H1 (cell line): ENCODE measurements at regions of chr9 and their contacts with region 1.

Region 1: DNA sequence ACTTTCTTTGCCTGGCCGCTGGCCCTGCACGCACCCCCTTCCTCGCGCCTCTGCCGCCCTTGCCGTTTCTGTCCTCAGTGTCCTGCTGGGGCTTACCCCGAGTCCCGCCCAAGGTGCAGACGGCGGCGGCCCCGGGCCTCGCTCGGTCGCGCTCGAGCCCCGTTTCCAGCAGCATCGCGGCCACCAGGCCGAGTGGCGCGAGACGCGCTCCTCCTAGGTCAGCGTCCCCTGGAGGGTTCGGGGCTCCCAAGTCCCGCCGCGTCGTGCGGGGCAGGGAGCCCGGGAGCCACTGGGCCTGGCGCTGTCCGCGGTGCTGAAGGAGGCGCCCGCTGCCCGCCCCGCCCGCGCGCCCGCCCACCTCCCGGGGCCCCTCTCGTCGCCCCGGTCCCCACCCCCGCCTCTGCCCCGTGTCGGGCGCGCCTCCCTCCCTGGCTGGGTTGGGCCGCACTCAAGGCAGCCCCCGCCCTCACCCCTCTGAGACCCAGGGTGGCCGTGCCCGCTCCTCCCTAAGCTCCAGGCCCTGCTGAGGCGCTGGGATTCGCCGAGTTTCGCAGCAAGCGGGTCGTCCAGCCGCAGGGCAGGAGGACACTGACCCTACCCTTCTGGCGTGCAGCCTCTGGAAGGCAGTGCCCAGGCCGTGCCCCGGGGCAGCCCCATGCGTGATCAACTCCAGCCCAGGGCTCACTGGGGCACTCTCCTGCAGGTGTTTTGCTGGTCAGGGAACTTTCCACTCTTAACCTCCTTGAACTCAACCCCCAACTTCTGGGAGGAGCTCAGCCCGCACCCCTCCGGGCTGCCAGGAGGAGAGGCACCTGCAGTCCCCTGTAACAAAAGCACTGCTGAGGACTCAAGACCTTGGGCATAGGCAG is at the start of gene LHX3:
- DNase-seq: peak in 1 of 2 experiments; percentile 83
- H3K4me3 ChIP-seq: peak within 1 kb of the TSS in 1 of 4 experiments; percentile 37; a peak in 1 of 8 replicates
- H3K27ac ChIP-seq: no peak within 1 kb of the TSS
- H3K4me1 ChIP-seq: peaks cover 2 to 9% (median 6%) of the 10 kb centered on the region in 4 experiments; a peak in 6 of 7 replicates
- H3K27me3 ChIP-seq: peaks cover 47 to 61% (median 60%) of the 10 kb centered on the region in 4 experiments
- CTCF ChIP-seq: no peak
- EP300 ChIP-seq: no peak
- POLR2A ChIP-seq: no peak
- RAD21 ChIP-seq: no peak
- total RNA-seq, gene LHX3: not detected in 2 replicates

Region 2: GRCh38 chr9:135864447-135865049 is 340.5 kb before region 1 on chr9:
- CTCF ChIA-PET with region 1: no interaction called
- POLR2A ChIA-PET with region 1: no interaction called
- DNase-seq: peak; percentile 43 to 97
- H3K4me3 ChIP-seq: no peak overlapping the region
- H3K27ac ChIP-seq: no peak overlapping the region
- H3K4me1 ChIP-seq: peaks cover 0 to 9% (median 0%) of the 10 kb centered on the region in 4 experiments; a peak in 3 of 7 replicates
- H3K27me3 ChIP-seq: no peaks in the 10 kb centered on the region
- CTCF ChIP-seq: peak; percentile 65 to 82 (median 80)
- EP300 ChIP-seq: no peak
- POLR2A ChIP-seq: no peak
- RAD21 ChIP-seq: peak; percentile 58 to 70

Region 3: GRCh38 chr9:136138566-136138965 is 66.5 kb before region 1 on chr9:
- CTCF ChIA-PET with region 1: interaction called, 10 read pairs
- POLR2A ChIA-PET with region 1: interaction called, 4 read pairs
- DNase-seq: peak; percentile 66 to 95
- H3K4me3 ChIP-seq: 0 out of 8 replicates have a peak overlapping the region, but pooled peaks of 1 of the 4 experiments have one; percentile 20
- H3K27ac ChIP-seq: no peak overlapping the region
- H3K4me1 ChIP-seq: peaks cover 3 to 28% (median 18%) of the 10 kb centered on the region in 4 experiments
- H3K27me3 ChIP-seq: peaks cover 4 to 10% (median 10%) of the 10 kb centered on the region in 4 experiments; a peak in 6 of 7 replicates
- CTCF ChIP-seq: peak in 2 of 3 experiments; percentile 78 to 95; a peak in 3 of 4 replicates
- EP300 ChIP-seq: no peak
- POLR2A ChIP-seq: no peak
- RAD21 ChIP-seq: peak; percentile 68 to 77

Region 4: GRCh38 chr9:136189394-136190236 is 15.5 kb before region 1 on chr9:
- CTCF ChIA-PET with region 1: interaction called, 18 read pairs
- POLR2A ChIA-PET with region 1: interaction called, 9 read pairs
- DNase-seq: peak in 1 of 2 experiments; percentile 50
- H3K4me3 ChIP-seq: no peak overlapping the region
- H3K27ac ChIP-seq: no peak overlapping the region
- H3K4me1 ChIP-seq: peaks cover 0 to 11% (median 6%) of the 10 kb centered on the region in 4 experiments; a peak in 5 of 7 replicates
- H3K27me3 ChIP-seq: peaks cover 33 to 49% (median 46%) of the 10 kb centered on the region in 4 experiments
- CTCF ChIP-seq: no peak
- EP300 ChIP-seq: no peak
- POLR2A ChIP-seq: no peak
- RAD21 ChIP-seq: no peak

Region 5: DNA sequence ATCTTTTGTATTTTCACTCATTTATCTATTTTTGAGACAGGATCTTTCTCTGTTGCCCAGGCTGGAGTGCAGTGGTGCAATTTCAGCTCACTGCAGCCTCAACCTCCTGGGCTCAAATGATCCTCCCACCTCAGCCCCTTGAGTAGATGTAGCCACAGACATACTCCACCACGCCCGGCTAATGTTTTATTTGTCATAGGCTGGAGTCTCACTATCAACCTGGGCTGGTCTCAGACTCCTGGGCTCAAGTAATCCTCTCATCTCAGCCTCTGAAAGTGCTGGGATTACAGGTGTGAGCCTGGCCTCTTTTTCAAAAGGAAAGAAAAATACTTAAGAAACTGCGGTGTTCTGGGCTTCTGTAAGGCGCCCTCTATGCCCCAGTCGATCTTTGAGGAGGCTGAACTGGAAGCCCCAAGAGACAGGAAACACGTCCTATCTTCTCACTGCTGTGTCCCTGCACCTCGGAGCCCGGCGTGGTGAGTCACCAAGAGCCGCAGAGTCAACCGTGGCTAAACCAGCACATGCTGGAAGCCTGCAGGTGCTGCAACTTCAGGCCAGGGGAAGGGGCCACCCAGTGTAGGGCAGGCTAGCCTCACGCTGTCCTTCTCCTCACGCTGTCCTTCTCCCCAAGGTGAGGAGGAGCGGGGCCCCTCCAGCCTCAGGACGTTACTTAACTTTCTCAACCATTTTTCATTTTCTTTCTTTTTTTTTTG is 15.1 kb after region 1 on chr9:
- CTCF ChIA-PET with region 1: interaction called, 26 read pairs
- POLR2A ChIA-PET with region 1: interaction called, 17 read pairs
- DNase-seq: no peak
- H3K4me3 ChIP-seq: no peak overlapping the region
- H3K27ac ChIP-seq: no peak overlapping the region
- H3K4me1 ChIP-seq: peaks cover 0 to 2% (median 0%) of the 10 kb centered on the region in 4 experiments; a peak in 2 of 7 replicates
- H3K27me3 ChIP-seq: no peaks in the 10 kb centered on the region
- CTCF ChIP-seq: no peak
- EP300 ChIP-seq: no peak
- POLR2A ChIP-seq: no peak
- RAD21 ChIP-seq: no peak

Region 6: DNA sequence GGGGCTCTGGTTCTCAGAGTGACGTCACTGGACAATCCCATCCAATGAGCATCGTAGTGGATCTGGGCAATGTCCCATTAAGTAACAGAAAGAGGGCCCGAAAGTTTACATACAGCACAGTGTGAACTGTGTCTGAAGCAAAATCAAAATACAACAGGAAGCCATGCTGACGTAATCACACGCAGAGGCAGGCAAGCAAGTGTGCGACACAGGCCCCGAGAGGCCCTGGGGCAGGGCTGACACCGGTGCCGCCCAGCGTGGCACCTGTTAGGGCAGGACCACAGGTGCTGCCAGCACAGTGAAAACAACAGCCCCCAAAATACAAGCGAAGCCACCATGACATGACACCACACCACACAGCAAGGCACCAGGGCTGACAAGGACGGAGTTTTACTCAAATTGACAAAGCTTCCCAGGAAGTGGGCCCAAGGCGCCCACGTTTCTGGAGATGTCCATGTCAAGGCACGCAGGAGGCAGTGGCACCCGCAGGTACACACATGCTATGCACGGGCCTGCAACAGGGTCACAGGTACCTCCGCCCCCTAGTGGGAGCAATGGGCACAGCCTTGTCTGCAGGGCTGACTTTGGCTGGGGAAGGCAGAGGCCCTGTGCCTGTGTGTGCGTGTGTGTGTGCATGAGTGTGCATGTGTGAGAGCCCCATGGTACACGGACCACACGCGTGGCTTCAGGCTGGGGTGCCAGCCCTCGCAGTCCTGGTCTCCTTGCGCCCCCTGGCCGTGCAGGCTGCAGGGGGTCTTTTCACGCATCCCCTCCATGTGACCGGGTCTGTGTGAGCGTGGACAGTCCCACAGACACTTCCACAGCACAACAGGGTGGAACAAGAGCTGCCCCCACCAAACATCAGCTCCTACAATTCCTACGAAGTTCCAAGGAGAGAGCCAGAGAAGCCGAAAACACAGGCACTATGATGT is 20.9 kb after region 1 on chr9:
- CTCF ChIA-PET with region 1: interaction called, 26 read pairs
- POLR2A ChIA-PET with region 1: interaction called, 3 read pairs
- DNase-seq: peak; percentile 44 to 92
- H3K4me3 ChIP-seq: no peak overlapping the region
- H3K27ac ChIP-seq: no peak overlapping the region
- H3K4me1 ChIP-seq: no peaks in the 10 kb centered on the region; a peak in 1 of 7 replicates
- H3K27me3 ChIP-seq: no peaks in the 10 kb centered on the region
- CTCF ChIP-seq: peak in 2 of 3 experiments; percentile 98 to 99; a peak in 3 of 4 replicates
- EP300 ChIP-seq: no peak
- POLR2A ChIP-seq: no peak
- RAD21 ChIP-seq: peak; percentile 74 to 85

Region 7: GRCh38 chr9:136283291-136284235 is 78.5 kb after region 1 on chr9:
- CTCF ChIA-PET with region 1: interaction called, 11 read pairs
- POLR2A ChIA-PET with region 1: no interaction called
- DNase-seq: peak; percentile 43 to 93
- H3K4me3 ChIP-seq: no peak overlapping the region
- H3K27ac ChIP-seq: no peak overlapping the region
- H3K4me1 ChIP-seq: peaks cover 0 to 4% (median 2%) of the 10 kb centered on the region in 4 experiments; a peak in 3 of 7 replicates
- H3K27me3 ChIP-seq: no peaks in the 10 kb centered on the region
- CTCF ChIP-seq: peak in 2 of 3 experiments; percentile 89 to 92; a peak in 3 of 4 replicates
- EP300 ChIP-seq: no peak
- POLR2A ChIP-seq: no peak
- RAD21 ChIP-seq: peak; percentile 86 to 92